B cell (primary cell): ENCODE measurements at regions of chr20 and their contacts with region 1.

Region 1: DNA sequence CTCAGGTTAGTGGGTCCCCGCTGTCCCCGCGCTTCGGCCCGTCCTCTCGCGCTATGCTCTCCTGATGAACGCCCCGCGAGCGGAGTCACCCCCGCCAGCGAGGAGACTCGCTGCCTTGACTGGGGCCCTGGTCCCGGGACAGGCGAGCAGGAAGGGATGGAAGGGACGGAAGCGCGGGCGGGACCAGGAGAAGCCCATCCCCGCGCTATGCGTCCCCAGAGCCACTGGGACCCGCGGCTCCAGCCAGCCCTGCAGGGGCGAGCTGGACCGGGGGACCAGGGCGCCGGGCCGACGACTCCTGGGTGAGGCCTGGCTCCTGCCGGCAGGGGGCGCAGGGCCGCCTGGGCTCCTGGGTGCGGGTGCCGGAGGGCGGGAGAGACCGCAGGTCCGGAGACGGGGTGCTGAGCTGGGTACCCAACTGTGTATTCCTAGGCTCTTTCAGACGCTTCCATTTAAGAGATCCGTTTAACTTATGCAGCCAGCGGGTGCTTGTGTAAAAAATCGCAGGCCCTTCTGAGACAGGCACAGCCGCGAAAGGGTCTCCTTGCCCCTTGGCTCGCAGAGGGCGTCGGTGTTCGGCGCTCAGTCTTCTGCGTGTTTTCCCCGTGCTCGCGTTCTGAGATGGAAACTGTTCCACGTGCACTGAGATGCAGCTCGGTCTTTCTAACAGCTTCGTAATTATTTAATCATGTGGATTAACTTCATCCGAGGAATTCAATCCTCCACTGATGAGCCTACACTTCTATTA is 586 bp upstream of the SYCP2 start:
- DNase-seq: peak; percentile 86
- ATAC-seq: peak; percentile 84
- H3K4me3 ChIP-seq: peak overlapping the region in 4 of 5 experiments; percentile 51 to 69 (median 63)
- H3K4me3 Mint-ChIP-seq: peak overlapping the region; percentile 80
- H3K27ac ChIP-seq: no peak overlapping the region
- H3K27ac Mint-ChIP-seq: peak overlapping the region; percentile 46
- H3K4me1 ChIP-seq: peaks cover 13 to 14% of the 10 kb centered on the region in 2 donors
- H3K4me1 Mint-ChIP-seq: peaks cover 28% of the 10 kb centered on the region
- H3K27me3 ChIP-seq: no peaks in the 10 kb centered on the region
- H3K27me3 Mint-ChIP-seq: no peaks in the 10 kb centered on the region
- CTCF ChIP-seq: peak; percentile 95

Region 2: DNA sequence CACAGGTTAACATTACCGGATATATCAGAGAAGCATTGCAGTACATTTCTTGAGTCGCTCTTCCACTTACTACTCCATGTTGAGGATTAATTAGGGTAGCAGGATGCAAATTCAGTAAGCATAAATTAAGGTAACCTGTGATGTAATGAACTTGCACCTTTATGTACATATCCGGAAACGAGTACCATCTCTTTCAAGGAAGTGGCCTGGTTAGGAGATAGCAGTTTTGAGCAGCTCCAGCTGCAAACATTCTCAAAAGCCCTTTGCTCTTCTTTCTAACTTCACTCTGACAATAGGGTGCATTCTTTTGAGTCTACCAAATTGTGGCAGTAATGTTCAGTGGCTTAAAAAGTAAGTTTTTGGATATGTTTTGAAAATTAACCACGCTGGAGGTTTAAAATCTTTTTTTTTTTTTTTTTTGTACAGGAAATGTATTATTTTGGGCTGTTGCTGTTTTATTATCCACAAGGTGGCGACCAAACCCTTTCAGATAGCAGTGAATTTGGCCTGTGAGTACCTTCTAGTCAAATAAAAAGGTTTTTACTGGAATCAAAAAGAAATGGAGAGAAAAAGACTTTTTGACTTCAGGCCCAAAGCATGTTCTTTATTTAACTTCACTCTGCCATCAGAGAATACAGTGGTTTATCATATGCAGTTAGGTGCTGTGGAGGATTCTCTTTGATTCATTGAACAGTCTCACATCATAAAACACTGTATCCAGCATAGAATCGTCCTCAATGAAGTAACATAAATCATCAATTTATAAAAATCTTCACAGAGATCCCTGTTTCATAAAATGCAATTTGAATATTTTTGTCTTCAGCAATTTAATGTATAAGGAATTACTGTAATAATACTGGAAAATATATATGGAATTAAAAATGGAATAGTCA is 15.1 kb after region 1 on chr20:
- CTCF ChIA-PET with region 1: interaction called, 45 read pairs
- POLR2A ChIA-PET with region 1: no interaction called
- intact Hi-C with region 1: loop called (anchors 2 kb)
- DNase-seq: peak; percentile 68
- ATAC-seq: peak; percentile 56
- H3K4me3 ChIP-seq: no peak overlapping the region
- H3K4me3 Mint-ChIP-seq: peak overlapping the region; percentile 38
- H3K27ac ChIP-seq: peak overlapping the region in 1 of 2 donors; percentile 39
- H3K27ac Mint-ChIP-seq: peak overlapping the region; percentile 33
- H3K4me1 ChIP-seq: peaks cover 4 to 10% of the 10 kb centered on the region in 2 donors
- H3K4me1 Mint-ChIP-seq: peaks cover 12% of the 10 kb centered on the region
- H3K27me3 ChIP-seq: no peaks in the 10 kb centered on the region
- H3K27me3 Mint-ChIP-seq: no peaks in the 10 kb centered on the region
- CTCF ChIP-seq: peak; percentile 86

Region 3: GRCh38 chr20:59954718-59955117 is 20.7 kb after region 1 on chr20:
- CTCF ChIA-PET with region 1: interaction called, 45 read pairs
- POLR2A ChIA-PET with region 1: no interaction called
- intact Hi-C with region 1: loop called (anchors 2 kb)
- DNase-seq: no peak
- ATAC-seq: no peak
- H3K4me3 ChIP-seq: no peak overlapping the region
- H3K4me3 Mint-ChIP-seq: no peak overlapping the region
- H3K27ac ChIP-seq: no peak overlapping the region
- H3K27ac Mint-ChIP-seq: no peak overlapping the region
- H3K4me1 ChIP-seq: no peaks in the 10 kb centered on the region
- H3K4me1 Mint-ChIP-seq: no peaks in the 10 kb centered on the region
- H3K27me3 ChIP-seq: no peaks in the 10 kb centered on the region
- H3K27me3 Mint-ChIP-seq: no peaks in the 10 kb centered on the region
- CTCF ChIP-seq: no peak

Region 4: DNA sequence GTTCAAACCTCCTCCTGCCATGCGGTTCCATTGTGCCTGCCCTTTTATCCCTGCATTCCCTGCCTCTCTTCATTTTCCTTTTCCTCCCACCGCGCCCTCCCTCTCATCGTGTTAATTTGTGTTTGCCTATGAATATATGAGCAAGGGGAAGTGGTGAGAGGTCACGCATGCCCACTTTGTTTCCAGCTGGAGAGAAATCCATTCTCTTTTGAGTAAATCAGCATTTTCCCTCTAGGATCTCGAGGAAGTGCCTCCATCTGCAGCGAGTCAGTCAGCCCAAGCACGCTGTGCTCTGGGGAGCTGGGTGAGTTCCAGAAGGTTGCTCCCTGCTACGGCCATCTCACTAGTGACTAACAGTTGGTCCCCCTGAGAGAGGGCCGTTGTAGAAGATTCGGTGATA is 67.1 kb after region 1 on chr20:
- CTCF ChIA-PET with region 1: no interaction called
- POLR2A ChIA-PET with region 1: no interaction called
- intact Hi-C with region 1: no loop called
- DNase-seq: no peak
- ATAC-seq: no peak
- H3K4me3 ChIP-seq: no peak overlapping the region
- H3K4me3 Mint-ChIP-seq: no peak overlapping the region
- H3K27ac ChIP-seq: no peak overlapping the region
- H3K27ac Mint-ChIP-seq: no peak overlapping the region
- H3K4me1 ChIP-seq: no peaks in the 10 kb centered on the region
- H3K4me1 Mint-ChIP-seq: no peaks in the 10 kb centered on the region
- H3K27me3 ChIP-seq: no peaks in the 10 kb centered on the region
- H3K27me3 Mint-ChIP-seq: no peaks in the 10 kb centered on the region
- CTCF ChIP-seq: no peak